HCT116 (cell line): ENCODE measurements at regions of chr17 and their contacts with region 1.

Region 1: DNA sequence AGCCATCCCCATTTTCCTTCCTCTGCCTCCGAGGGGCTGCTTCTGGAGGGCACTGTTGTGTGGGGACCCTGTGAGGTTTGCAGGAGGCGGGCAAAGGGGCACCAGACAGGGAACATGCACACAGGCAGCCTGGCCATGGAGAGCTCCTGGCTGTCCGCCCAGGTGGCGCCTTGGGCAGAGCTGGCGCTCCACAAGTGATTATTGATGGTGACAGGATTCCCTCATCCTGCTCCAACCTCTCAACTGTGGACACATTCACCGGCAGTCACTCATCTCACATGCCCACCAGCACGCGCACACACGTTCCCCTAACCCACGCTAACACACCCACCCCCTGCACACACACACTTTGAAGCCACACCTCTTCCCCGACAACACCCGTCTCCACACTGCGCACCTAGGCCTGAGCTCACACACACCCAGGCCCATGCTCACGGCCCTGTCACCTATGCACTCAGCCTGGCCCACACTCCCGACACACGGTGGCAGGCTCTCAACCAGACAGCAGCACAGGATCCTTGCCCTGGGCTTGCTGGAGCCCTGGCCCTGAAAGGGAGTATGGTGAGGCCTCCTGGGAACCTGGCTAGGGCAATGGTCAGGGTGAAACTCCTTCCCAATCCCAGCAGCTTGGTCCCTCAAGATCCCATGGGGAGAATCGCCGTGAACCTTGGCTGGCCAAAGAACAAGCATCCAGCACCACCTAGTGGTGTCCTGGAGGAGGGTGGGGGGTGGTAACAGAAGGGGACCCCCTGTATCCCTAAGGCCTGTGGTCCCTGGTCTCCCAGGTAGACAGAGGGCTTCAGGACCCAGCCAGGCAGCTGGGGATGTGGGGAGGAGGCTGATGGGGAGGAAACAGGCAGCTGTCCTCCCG is 3.6 kb downstream of the PNMT start:
- DNase-seq: peak; percentile 18
- ATAC-seq: peak; percentile 77
- H3K4me3 ChIP-seq: no peak overlapping the region
- H3K27ac ChIP-seq: no peak overlapping the region; the same call in 1 of the 2 replicates
- H3K4me1 ChIP-seq: peaks cover 20 to 21% of the 10 kb centered on the region in 2 experiments; a peak in 3 of 4 replicates
- H3K27me3 ChIP-seq: no peaks in the 10 kb centered on the region
- CTCF ChIP-seq: peak; percentile 77 to 94 (median 81)
- POLR2A ChIP-seq: no peak
- RAD21 ChIP-seq: peak; percentile 86

Region 2: GRCh38 chr17:39485555-39485954 is 186.3 kb before region 1 on chr17:
- CTCF ChIA-PET with region 1: no interaction called
- POLR2A ChIA-PET with region 1: no interaction called
- RAD21 ChIA-PET with region 1: no interaction called
- intact Hi-C with region 1: no loop called
- DNase-seq: peak; percentile 15
- ATAC-seq: peak; percentile 67; the same call in 1 of the 2 replicates
- H3K4me3 ChIP-seq: no peak overlapping the region
- H3K27ac ChIP-seq: peak overlapping the region; percentile 43; the same call in 1 of the 2 replicates
- H3K4me1 ChIP-seq: peaks cover 13% of the 10 kb centered on the region in 2 experiments
- H3K27me3 ChIP-seq: no peaks in the 10 kb centered on the region
- CTCF ChIP-seq: no peak
- POLR2A ChIP-seq: no peak
- RAD21 ChIP-seq: no peak

Region 3: GRCh38 chr17:39547713-39548478 is 124.0 kb before region 1 on chr17:
- CTCF ChIA-PET with region 1: interaction called, 10 read pairs
- POLR2A ChIA-PET with region 1: no interaction called
- RAD21 ChIA-PET with region 1: no interaction called
- intact Hi-C with region 1: loop called (anchors 5 kb)
- DNase-seq: peak; percentile 13
- ATAC-seq: peak; percentile 92
- H3K4me3 ChIP-seq: no peak overlapping the region
- H3K27ac ChIP-seq: no peak overlapping the region
- H3K4me1 ChIP-seq: no peaks in the 10 kb centered on the region
- H3K27me3 ChIP-seq: no peaks in the 10 kb centered on the region
- CTCF ChIP-seq: peak; percentile 92 to 99 (median 98)
- POLR2A ChIP-seq: no peak
- RAD21 ChIP-seq: peak; percentile 83

Region 4: DNA sequence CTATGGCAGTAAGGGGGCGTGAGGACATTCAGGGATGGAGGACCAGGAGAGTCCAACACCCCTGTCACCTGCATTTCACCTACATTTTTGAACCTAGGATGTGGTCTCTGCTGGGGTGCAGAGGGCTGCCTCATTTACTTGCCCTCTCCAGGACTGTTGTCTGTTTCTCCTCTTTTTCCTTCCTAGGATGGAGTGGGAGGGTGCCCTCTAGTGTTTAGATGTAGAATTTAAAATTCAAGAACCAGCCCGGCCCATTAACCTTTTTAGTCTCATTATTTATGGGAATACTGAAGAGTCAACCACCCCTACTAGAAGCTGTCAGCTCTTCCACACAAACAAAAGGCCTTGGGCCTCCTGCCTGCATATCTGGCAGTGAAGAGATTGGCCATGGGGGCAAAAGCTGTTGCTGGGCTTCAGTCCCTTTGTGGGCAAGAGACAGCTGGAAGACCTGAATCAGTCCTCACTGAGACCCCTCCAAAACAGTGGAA is 37.5 kb before region 1 on chr17:
- CTCF ChIA-PET with region 1: interaction called, 8 read pairs
- POLR2A ChIA-PET with region 1: no interaction called
- RAD21 ChIA-PET with region 1: no interaction called
- intact Hi-C with region 1: loop called (anchors 2 kb)
- DNase-seq: no peak
- ATAC-seq: no peak
- H3K4me3 ChIP-seq: no peak overlapping the region
- H3K27ac ChIP-seq: no peak overlapping the region
- H3K4me1 ChIP-seq: peaks cover 60 to 78% of the 10 kb centered on the region in 2 experiments
- H3K27me3 ChIP-seq: no peaks in the 10 kb centered on the region
- CTCF ChIP-seq: peak; percentile 64 to 97 (median 83); a peak in 5 of 6 replicates
- POLR2A ChIP-seq: no peak
- RAD21 ChIP-seq: no peak; the same call in 1 of the 2 replicates

Region 5: GRCh38 chr17:39653662-39654331 is 18.1 kb before region 1 on chr17:
- CTCF ChIA-PET with region 1: interaction called, 18 read pairs
- POLR2A ChIA-PET with region 1: no interaction called
- RAD21 ChIA-PET with region 1: no interaction called
- intact Hi-C with region 1: no loop called
- DNase-seq: no peak
- ATAC-seq: peak; percentile 76
- H3K4me3 ChIP-seq: no peak overlapping the region
- H3K27ac ChIP-seq: no peak overlapping the region; the same call in 1 of the 2 replicates
- H3K4me1 ChIP-seq: peaks cover 13 to 52% of the 10 kb centered on the region in 2 experiments
- H3K27me3 ChIP-seq: no peaks in the 10 kb centered on the region
- CTCF ChIP-seq: peak; percentile 70 to 99 (median 98); a peak in 5 of 6 replicates
- POLR2A ChIP-seq: no peak
- RAD21 ChIP-seq: no peak; the same call in none of the 2 replicates

Region 6: GRCh38 chr17:39754161-39754951 is 82.5 kb after region 1 on chr17:
- CTCF ChIA-PET with region 1: no interaction called
- POLR2A ChIA-PET with region 1: no interaction called
- RAD21 ChIA-PET with region 1: interaction called in 1 of 2 experiments, 5 read pairs
- intact Hi-C with region 1: loop called (anchors 5 kb)
- DNase-seq: peak; percentile 73
- ATAC-seq: peak; percentile 87
- H3K4me3 ChIP-seq: peak overlapping the region; percentile 54 to 65
- H3K27ac ChIP-seq: peak overlapping the region; percentile 91
- H3K4me1 ChIP-seq: peaks cover 33 to 55% of the 10 kb centered on the region in 2 experiments
- H3K27me3 ChIP-seq: peaks cover under 1% of the 10 kb centered on the region; the same call in 1 of the 2 replicates
- CTCF ChIP-seq: peak; percentile 72 to 95 (median 74)
- POLR2A ChIP-seq: peak; percentile 78
- RAD21 ChIP-seq: peak; percentile 97